ENCODE measurements at regions of chr2 and their contacts with region 1.

Region 1: DNA sequence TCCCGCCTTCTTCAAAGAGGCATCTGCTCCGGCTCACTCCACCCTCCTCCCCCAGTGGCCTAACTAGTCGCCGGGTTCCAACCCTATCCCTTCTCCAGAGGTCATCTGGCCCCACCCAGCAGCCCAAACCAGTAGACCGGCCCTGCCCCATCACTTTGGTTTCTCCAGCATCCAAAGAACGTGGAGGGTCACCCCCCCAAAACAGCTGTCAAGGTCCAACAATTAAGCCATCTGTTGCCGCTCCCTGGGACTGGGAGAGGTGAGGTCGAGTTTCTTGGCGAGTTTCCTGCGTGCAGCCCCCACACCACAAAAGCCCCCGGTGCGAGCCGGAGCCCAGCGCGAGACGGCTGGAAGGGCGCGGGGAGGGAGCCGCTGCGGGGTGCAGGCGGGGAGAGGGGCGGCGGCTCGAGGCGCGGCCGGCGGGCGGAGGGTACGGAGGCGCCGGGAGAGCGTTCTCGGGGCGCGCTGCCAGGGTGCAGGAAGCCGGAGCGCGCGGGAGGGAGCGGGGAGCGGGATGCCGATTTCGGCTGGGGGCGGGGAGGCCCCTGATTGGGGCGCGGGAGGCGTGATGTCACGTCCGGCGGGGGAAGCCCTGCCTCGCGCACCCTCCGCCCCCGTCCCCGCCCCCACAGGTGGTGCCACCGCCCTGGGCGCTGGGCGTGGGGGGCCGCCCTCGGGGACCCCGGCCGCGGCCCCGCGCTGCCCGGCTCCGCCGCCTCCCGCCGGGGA is 571 bp upstream of the GPC1 start:
- DNase-seq: peak; percentile 70 to 91 (median 81)
- ATAC-seq: peak; percentile 89
- H3K4me3 ChIP-seq: peak overlapping the region; percentile 48
- H3K4me3 Mint-ChIP-seq: peak overlapping the region; percentile 81 to 89 (median 86)
- H3K27ac ChIP-seq: no peak overlapping the region
- H3K27ac Mint-ChIP-seq: peak overlapping the region in 6 of 9 donors; percentile 14 to 77 (median 57)
- H3K4me1 ChIP-seq: peaks cover 0 to 6% of the 10 kb centered on the region in 2 donors
- H3K4me1 Mint-ChIP-seq: peaks cover 0 to 11% (median 4%) of the 10 kb centered on the region in 7 donors
- H3K27me3 ChIP-seq: peaks cover 0 to 12% of the 10 kb centered on the region in 2 donors
- H3K27me3 Mint-ChIP-seq: peaks cover 12 to 33% (median 21%) of the 10 kb centered on the region in 5 donors

Region 2: GRCh38 chr2:238945433-238946150 is 1489.3 kb before region 1 on chr2:
- CTCF ChIA-PET with region 1: no interaction called
- POLR2A ChIA-PET with region 1: no interaction called
- intact Hi-C with region 1: no loop called
- DNase-seq: peak in 1 of 9 donors; percentile 19
- ATAC-seq: no peak
- H3K4me3 ChIP-seq: no peak overlapping the region
- H3K4me3 Mint-ChIP-seq: no peak overlapping the region
- H3K27ac ChIP-seq: no peak overlapping the region
- H3K27ac Mint-ChIP-seq: no peak overlapping the region
- H3K4me1 ChIP-seq: no peaks in the 10 kb centered on the region
- H3K4me1 Mint-ChIP-seq: peaks cover 5 to 12% (median 9%) of the 10 kb centered on the region in 7 donors
- H3K27me3 ChIP-seq: no peaks in the 10 kb centered on the region
- H3K27me3 Mint-ChIP-seq: peaks cover 0 to 14% (median 8%) of the 10 kb centered on the region in 5 donors

Region 3: GRCh38 chr2:240060977-240061591 is 373.8 kb before region 1 on chr2:
- CTCF ChIA-PET with region 1: no interaction called
- POLR2A ChIA-PET with region 1: no interaction called
- intact Hi-C with region 1: loop called in 1 of 2 experiments (anchors 2 kb)
- DNase-seq: peak in 7 of 9 donors; percentile 29 to 62 (median 48)
- ATAC-seq: peak; percentile 78
- H3K4me3 ChIP-seq: no peak overlapping the region
- H3K4me3 Mint-ChIP-seq: no peak overlapping the region
- H3K27ac ChIP-seq: no peak overlapping the region
- H3K27ac Mint-ChIP-seq: no peak overlapping the region
- H3K4me1 ChIP-seq: no peaks in the 10 kb centered on the region
- H3K4me1 Mint-ChIP-seq: no peaks in the 10 kb centered on the region
- H3K27me3 ChIP-seq: no peaks in the 10 kb centered on the region
- H3K27me3 Mint-ChIP-seq: peaks cover 14 to 38% (median 27%) of the 10 kb centered on the region in 5 donors

Region 4: DNA sequence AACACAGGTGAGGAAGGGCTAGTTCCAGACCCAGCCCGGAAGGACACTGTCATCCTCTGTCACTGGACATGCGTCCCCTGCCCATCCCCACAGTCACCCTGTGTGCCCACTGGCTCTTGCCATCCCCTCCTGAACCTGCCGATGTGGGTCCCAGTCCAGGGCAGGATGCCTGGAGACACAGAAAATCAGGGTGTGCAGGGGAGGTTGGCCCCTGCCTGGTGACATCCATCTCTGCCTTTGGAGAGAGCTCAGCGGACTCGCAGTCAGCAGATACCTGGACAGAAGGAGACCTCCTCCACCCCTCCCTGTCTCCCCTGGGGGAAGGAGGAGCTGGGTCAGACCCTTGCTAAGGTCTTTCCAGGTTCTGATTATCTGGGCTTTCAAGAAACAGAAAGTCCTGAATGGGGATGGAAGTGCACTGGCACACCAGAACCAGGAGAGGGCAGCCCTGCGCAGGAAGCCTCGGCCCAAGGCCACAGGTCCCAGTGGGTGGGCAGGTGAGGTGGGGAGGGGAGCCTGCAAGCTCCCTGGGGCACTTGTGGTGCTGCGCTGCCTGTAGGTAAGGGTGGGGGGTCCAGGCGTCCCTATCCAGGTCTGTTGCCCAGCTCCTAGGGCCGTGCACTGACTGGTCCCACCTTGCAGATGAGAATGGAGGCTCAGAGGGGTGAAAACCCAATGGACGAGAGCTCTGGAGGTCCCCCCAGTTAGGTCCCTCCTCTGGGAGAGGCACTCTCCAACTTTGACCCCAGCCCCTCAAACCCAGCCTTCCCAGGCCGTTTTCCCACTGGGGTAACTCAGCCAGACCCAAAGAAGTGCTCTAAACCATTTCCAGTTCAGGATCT is 284.7 kb before region 1 on chr2:
- CTCF ChIA-PET with region 1: no interaction called
- POLR2A ChIA-PET with region 1: no interaction called
- intact Hi-C with region 1: loop called in 1 of 2 experiments (anchors 1 kb)
- DNase-seq: peak in 4 of 9 donors; percentile 7 to 40 (median 16)
- ATAC-seq: peak; percentile 48
- H3K4me3 ChIP-seq: no peak overlapping the region
- H3K4me3 Mint-ChIP-seq: no peak overlapping the region
- H3K27ac ChIP-seq: no peak overlapping the region
- H3K27ac Mint-ChIP-seq: no peak overlapping the region
- H3K4me1 ChIP-seq: no peaks in the 10 kb centered on the region
- H3K4me1 Mint-ChIP-seq: peaks cover 0 to 2% (median 0%) of the 10 kb centered on the region in 7 donors
- H3K27me3 ChIP-seq: no peaks in the 10 kb centered on the region
- H3K27me3 Mint-ChIP-seq: peaks cover 0 to 31% (median 20%) of the 10 kb centered on the region in 5 donors

Region 5: GRCh38 chr2:240400371-240401161 is 34.3 kb before region 1 on chr2:
- CTCF ChIA-PET with region 1: no interaction called
- POLR2A ChIA-PET with region 1: no interaction called
- intact Hi-C with region 1: loop called in 1 of 2 experiments (anchors 5 kb)
- DNase-seq: peak in 1 of 9 donors; percentile 3
- ATAC-seq: no peak
- H3K4me3 ChIP-seq: no peak overlapping the region
- H3K4me3 Mint-ChIP-seq: no peak overlapping the region
- H3K27ac ChIP-seq: no peak overlapping the region
- H3K27ac Mint-ChIP-seq: no peak overlapping the region
- H3K4me1 ChIP-seq: no peaks in the 10 kb centered on the region
- H3K4me1 Mint-ChIP-seq: peaks cover 6 to 14% (median 9%) of the 10 kb centered on the region in 7 donors
- H3K27me3 ChIP-seq: no peaks in the 10 kb centered on the region
- H3K27me3 Mint-ChIP-seq: no peaks in the 10 kb centered on the region